ENCODE measurements at regions of chr1 and their contacts with region 1.

Region 1: GRCh38 chr1:195979646-195980045 is 628.6 kb downstream of the KCNT2 start:
- DNase-seq: no peak
- ATAC-seq: no peak
- H3K4me3 ChIP-seq: no peak overlapping the region
- H3K27ac ChIP-seq: no peak overlapping the region
- H3K4me1 ChIP-seq: no peaks in the 10 kb centered on the region
- H3K27me3 ChIP-seq: no peaks in the 10 kb centered on the region
- CTCF ChIP-seq: no peak

Region 2: GRCh38 chr1:196005426-196005825 is 25.8 kb after region 1 on chr1:
- intact Hi-C with region 1: loop called in 1 of 10 experiments (anchors 2 kb)
- DNase-seq: no peak
- ATAC-seq: no peak
- H3K4me3 ChIP-seq: no peak overlapping the region
- H3K27ac ChIP-seq: no peak overlapping the region
- H3K4me1 ChIP-seq: no peaks in the 10 kb centered on the region
- H3K27me3 ChIP-seq: no peaks in the 10 kb centered on the region
- CTCF ChIP-seq: no peak

Region 3: GRCh38 chr1:196178083-196178635 is 198.5 kb after region 1 on chr1:
- intact Hi-C with region 1: no loop called
- DNase-seq: no peak
- ATAC-seq: peak in 2 of 8 donors; percentile 22 to 74
- H3K4me3 ChIP-seq: no peak overlapping the region
- H3K27ac ChIP-seq: no peak overlapping the region
- H3K4me1 ChIP-seq: peaks cover 0 to 10% (median 0%) of the 10 kb centered on the region in 9 donors
- H3K27me3 ChIP-seq: no peaks in the 10 kb centered on the region
- CTCF ChIP-seq: no peak

Measured in heart right ventricle (tissue), 16 donors.